ENCODE measurements at regions of chr15 and their contacts with region 1.

Region 1: DNA sequence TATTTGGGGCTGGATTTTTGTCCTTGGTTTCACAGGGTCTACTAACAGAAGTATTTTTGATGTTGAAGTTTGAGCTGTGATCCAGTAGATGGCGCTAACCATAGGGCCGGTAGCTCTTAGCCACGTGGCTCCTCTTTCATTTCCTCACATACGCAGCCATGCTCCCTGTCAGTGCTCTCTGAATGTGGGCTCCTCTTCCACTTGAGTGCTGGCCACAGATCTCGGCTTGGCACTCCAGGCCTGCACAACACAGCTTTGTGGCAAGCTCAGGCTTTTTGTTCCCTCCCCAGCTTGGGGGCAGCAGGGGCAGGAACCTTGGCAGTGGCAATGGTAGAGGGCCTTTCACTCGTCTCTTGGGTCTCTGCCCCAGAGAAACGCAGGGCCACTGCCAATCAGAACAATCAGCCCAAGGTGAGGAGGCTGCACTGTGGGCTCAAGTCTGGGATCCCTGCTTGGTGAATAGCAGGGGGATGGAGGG is 18.6 kb upstream of the DNAAF4 start:
- H3K4me3 ChIP-seq: no peak overlapping the region
- H3K27ac ChIP-seq: no peak overlapping the region
- H3K4me1 ChIP-seq: no peaks in the 10 kb centered on the region
- CTCF ChIP-seq: no peak

Region 2: DNA sequence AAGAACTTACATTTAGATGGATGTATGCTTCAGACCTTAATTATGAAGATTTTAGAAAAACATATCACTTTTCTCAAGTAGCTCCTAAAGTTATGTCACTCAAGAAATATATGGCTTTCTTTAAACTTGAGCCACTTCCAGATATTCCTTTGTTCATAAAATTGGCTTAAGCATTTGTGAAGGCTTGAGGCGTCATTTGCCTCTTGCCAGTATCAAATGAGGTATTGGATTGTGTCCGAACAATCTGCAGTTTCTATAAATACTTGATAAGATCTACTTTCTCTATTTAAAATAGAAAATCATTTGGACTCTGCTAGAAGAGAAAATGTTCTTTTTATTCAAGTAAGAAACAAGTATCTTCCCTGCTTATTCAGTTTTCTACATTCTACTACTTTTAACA is 432.5 kb before region 1 on chr15:
- CTCF ChIA-PET with region 1: no interaction called
- POLR2A ChIA-PET with region 1: no interaction called
- H3K4me3 ChIP-seq: no peak overlapping the region
- H3K27ac ChIP-seq: no peak overlapping the region
- H3K4me1 ChIP-seq: no peaks in the 10 kb centered on the region
- CTCF ChIP-seq: no peak

Region 3: GRCh38 chr15:55515991-55516780 is 10.4 kb before region 1 on chr15:
- CTCF ChIA-PET with region 1: interaction called, 14 read pairs
- POLR2A ChIA-PET with region 1: no interaction called
- H3K4me3 ChIP-seq: no peak overlapping the region
- H3K27ac ChIP-seq: no peak overlapping the region
- H3K4me1 ChIP-seq: no peaks in the 10 kb centered on the region
- CTCF ChIP-seq: no peak

Measured in HEK293 (cell line).